ENCODE measurements at regions of chr17 and their contacts with region 1.

Region 1: DNA sequence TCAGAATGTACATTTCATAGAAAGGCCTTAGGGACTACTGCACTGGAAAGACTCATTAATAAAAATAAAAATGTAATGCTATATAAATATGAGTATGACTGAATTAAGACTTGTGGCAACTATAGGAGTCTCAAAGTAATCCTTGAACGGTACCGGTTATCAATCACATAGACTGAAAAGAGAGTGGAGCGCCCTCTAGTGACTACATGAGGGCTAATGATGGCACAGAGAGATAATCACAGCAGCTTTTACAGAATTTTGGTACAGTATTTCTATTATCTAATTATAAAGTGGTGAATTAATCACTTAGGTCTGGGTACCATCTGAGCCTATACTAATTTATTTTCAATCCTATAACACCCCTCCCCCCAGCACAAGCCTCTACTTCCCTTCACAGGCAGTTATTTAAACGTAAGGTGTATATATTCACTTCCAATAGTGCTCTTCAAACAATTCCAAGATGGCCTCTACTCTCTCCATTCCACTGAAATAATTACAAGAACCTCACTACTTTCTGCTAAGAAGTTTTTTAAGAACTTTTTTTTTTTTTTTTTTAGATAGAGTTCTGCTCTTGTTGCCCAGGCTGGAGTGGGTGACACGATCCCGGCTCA is 40.7 kb upstream of the ANKFY1 start:
- DNase-seq: peak in 3 of 10 donors; percentile 26 to 60 (median 50)

Region 2: DNA sequence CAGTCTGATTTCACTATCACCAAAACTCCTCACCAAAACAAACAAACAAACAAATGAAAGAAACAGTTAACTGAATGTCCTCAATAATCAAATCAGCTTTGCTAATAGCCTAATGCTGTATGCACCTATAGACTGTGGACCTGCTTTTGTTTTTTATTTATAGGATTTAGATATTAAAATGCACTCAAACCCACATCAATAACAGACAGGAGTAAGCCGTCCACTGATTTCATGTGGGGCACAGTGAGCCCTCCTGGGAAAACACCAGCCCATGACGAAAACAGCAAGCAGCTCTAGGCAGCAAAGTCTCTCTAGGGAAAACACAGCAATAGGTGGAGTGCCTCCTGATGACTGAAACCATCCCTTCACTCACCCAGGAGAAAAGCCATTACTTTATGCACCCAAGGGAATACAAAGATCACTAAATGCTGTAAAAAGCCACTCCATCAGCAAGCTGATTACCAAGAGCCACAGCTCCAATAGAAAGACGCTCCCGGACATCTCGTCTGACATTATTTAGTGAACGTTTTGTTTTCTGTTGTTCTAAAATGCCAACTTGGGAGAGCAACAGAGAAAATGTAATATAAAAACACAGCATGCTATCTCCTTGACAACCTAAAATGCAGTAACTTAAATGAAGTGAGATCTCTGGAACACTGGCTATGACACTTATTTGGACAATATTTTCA is 88.5 kb before region 1 on chr17:
- intact Hi-C with region 1: loop called (anchors 2 kb)
- DNase-seq: peak in 1 of 10 donors; percentile 60

Region 3: DNA sequence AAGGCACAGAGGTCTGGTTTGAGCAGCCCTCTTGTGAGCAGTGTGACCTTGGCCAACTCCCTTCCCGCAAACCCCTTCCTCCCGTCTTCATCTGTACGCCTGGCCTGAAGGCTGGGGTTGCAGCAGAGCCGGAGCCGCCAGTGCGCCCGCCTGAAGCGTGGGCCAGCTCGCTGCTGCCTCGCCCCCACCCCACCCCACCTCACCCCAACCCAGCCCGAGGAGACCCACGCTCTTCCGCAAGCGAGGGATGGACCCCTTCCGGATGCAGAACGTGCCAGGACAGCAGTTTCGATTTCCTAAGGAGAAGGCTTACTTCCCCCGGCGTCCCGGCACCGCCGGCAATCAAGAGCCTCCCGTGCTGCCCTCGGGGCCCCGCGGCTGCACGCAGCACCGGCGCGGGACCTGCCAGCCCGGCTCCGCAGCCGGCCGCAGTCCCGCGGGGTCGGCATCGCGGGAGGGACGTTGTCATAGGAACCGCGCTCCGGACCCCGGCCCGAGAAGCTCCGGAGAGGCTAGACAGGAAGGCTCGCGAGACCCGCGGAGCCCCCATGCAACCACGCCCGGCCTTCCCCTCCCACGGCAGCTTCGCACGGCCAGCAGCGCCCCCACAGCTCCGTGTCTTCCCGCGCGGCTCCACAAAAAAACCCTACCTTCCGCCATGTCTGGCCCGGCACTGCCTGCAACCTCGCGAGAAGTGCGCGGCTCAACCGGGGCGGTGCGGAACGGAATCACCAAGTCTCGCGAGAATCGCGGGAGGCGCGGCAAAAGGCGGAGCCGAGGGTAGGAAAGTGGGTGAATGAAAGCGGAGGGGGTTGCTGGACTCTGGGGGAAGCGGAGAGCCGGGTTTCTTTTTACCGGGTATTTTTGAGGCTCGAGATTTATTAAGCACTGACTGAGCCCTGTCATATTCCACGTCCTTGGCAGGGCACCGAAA is 41.0 kb before region 1 on chr17 and contains the start of gene ANKFY1:
- intact Hi-C with region 1: loop called (anchors 5 kb)
- DNase-seq: peak; percentile 93 to 99 (median 98)

Region 4: GRCh38 chr17:4412933-4413831 is 108.7 kb after region 1 on chr17:
- intact Hi-C with region 1: loop called (anchors 10 kb)
- DNase-seq: peak; percentile 83 to 98 (median 94)